ENCODE measurements at regions of chr12 and their contacts with region 1.

Region 1: DNA sequence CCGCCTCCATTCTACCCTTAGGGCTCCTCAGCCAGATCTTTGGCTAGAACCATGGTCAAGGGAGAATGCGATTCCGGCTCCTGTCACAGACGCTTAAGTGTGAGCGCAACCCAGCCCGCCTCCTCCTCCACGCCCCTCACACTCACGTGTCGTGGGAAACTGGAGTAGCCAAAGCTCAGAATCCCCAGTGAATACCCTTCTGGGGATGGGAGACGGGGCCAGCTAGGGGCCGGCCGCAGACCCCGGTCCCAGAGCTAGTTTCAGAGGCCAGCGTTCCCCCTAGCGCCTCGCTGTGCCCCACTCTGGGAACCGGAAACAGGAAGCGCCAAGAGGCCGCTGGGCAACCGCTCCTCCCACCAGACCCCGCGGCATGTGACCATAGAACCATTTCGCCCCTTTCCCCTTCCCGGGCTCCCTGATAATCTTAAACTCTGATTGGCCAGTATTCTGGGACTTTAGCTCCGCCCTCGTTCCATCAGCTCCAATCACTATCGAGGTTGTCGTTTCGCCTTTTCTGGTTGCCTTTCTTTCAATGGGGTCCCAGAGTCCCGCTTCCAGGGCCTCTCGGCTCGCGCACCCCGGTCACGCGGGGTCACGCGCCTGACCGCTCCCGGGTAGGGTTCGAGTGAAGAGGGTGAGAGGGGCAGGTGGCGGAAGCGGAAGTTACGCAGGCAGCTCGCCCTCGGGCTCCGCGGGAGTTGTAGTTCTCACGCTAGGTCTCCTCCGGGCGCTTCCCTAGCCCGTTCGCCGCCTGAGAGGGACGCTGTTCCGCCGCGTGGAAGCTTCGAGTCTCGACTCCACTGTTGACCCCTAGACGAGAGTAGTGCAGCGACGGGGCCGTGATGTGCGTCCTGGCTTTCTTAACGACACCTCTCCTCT is at the start of gene M6PR:
- DNase-seq: peak; percentile 91
- H3K4me3 Mint-ChIP-seq: peak within 1 kb of the TSS; percentile 100
- H3K27ac Mint-ChIP-seq: peak within 1 kb of the TSS; percentile 94
- H3K4me1 Mint-ChIP-seq: peaks cover 59% of the 10 kb centered on the region
- H3K27me3 Mint-ChIP-seq: no peaks in the 10 kb centered on the region
- total RNA-seq, gene M6PR: 161 and 175 TPM in 2 replicates

Region 2: DNA sequence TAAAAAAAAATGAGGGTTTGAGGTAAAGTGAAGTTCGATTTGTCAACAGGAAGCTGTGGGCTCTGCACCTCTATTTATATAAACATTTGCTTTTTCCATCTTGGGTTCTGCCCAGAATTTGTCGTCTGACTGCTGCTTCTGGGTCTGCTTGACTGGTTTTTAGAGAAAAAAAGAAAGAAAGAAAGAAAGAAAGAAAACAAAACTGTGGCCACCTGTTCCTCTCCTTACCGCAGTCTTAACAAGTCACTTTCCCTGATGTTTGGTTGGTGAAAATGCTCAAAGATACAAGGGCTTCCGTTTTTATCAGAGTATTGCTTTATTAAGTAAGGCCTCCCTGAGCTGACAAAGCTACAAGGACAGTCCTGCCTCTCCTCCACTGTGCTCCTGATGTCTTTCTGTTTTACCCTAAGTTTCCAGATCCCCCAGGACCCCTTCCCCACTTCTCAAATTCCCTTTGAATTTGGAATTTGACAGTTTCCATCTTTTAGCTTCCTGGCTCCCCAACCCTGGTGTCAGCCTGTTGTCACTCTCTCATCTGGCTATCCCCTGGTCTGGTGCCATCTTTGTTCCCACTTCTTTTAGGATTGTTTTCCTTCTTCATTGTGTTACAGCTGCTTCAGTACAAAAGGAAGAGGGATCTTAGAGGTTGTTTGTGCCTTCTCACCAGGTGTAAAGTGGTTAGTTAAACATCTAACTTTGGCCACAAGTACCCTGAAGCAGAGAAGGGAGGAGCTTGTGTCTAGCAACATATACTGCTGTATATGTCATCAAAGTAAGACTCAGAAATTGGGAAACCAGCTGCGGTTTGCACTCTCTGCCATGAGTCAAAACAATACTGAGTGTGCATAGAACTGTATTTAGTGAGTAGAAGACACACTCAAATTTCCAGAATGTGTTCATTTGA is 305.0 kb before region 1 on chr12:
- intact Hi-C with region 1: loop called (anchors 5 kb)
- DNase-seq: peak; percentile 46
- H3K4me3 Mint-ChIP-seq: peak overlapping the region; percentile 31
- H3K27ac Mint-ChIP-seq: peak overlapping the region; percentile 34
- H3K4me1 Mint-ChIP-seq: peaks cover 35% of the 10 kb centered on the region
- H3K27me3 Mint-ChIP-seq: peaks cover 41% of the 10 kb centered on the region

Region 3: GRCh38 chr12:8914716-8915526 is 34.7 kb before region 1 on chr12:
- intact Hi-C with region 1: loop called (anchors 1 kb)
- DNase-seq: peak; percentile 56
- H3K4me3 Mint-ChIP-seq: no peak overlapping the region
- H3K27ac Mint-ChIP-seq: no peak overlapping the region
- H3K4me1 Mint-ChIP-seq: peaks cover 13% of the 10 kb centered on the region
- H3K27me3 Mint-ChIP-seq: peaks cover 27% of the 10 kb centered on the region

Region 4: GRCh38 chr12:8936735-8937134 is 12.8 kb before region 1 on chr12:
- intact Hi-C with region 1: no loop called
- DNase-seq: no peak
- H3K4me3 Mint-ChIP-seq: no peak overlapping the region
- H3K27ac Mint-ChIP-seq: no peak overlapping the region
- H3K4me1 Mint-ChIP-seq: no peaks in the 10 kb centered on the region
- H3K27me3 Mint-ChIP-seq: no peaks in the 10 kb centered on the region

Region 5: DNA sequence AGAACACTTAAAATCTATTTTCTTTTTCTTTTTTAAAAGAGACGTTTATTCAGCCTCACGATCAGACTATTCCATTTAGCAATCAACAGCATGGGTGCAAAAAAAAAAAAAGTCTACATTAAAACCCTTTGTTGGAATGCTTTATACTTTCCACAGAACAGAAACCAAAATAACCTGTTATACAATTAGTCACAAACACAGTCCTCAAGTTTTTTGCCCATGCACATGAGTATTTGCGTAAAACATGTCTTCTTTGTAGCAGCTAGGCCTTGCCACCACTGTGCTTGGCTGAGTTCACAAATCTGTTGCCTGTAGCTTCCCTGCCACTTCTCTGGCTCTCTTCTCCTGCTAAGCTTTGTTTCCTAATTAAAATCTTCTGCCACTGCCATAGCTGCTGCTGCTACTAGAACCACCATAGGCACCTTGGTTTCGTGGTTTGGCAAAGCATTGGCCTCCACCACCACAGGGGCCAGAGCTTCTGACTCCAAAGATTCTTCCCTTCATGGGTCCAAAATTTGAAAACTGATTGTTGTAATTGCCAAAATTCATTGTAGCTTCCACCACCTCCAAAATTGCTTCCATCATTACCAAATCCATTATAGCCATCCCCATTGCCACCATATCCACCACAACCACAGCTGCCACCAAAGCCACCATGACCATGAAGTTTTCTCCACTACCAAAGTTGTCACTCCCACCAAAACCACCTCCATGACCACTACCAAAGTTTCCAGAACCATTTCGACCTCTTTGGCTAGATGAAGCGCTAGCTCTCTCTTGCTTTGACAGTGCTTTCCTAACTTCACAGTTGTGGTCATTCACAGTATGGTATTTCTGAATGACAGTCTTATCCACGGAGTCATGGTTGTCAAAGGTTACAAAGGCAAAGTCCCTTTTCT is 77.8 kb after region 1 on chr12:
- intact Hi-C with region 1: loop called (anchors 1 kb)
- DNase-seq: no peak
- H3K4me3 Mint-ChIP-seq: no peak overlapping the region
- H3K27ac Mint-ChIP-seq: peak overlapping the region; percentile 91
- H3K4me1 Mint-ChIP-seq: peaks cover 22% of the 10 kb centered on the region
- H3K27me3 Mint-ChIP-seq: no peaks in the 10 kb centered on the region

Region 6: DNA sequence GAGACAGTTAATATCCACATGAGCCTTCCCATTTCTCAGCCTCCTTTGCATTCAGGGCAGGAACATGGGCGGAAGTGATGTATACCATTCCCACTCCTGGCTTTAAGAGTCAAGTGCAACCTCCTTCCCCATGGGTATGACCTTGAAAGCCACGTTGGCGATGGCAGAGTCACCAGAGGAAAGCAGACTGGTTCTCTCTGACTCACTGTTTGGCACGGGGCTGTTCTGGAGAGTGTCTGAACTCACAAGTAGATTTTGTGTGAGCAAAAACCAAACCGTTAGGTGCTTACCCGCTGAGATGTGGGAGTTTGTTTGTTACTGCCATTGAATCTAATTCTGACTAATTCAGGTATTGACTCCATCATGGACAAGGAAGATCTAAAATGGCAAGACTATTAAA is 295.3 kb after region 1 on chr12:
- intact Hi-C with region 1: loop called (anchors 10 kb)
- DNase-seq: peak; percentile 13
- H3K4me3 Mint-ChIP-seq: no peak overlapping the region
- H3K27ac Mint-ChIP-seq: peak overlapping the region; percentile 95
- H3K4me1 Mint-ChIP-seq: peaks cover 39% of the 10 kb centered on the region
- H3K27me3 Mint-ChIP-seq: peaks cover 11% of the 10 kb centered on the region

Measured in activated T-helper 2 cell treated with anti-CD3 and anti-CD28 coated beads, Interferon-gamma antibody, Interleukin-2, Interleukin-4, amounts not matched to agents 10 μg/mL and 5 μg/mL and 100 μg/mL, durations not matched to agents 14 hours and 24 hours and 36 hours (primary cell).